ENCODE measurements at regions of chr12 and their contacts with region 1.

Region 1: GRCh38 chr12:50111693-50112455 is at the start of gene COX14:
- DNase-seq: peak; percentile 100
- H3K4me3 Mint-ChIP-seq: peak within 1 kb of the TSS; percentile 92
- H3K27ac Mint-ChIP-seq: peak within 1 kb of the TSS; percentile 93
- H3K4me1 Mint-ChIP-seq: peaks cover 39% of the 10 kb centered on the region
- H3K27me3 Mint-ChIP-seq: no peaks in the 10 kb centered on the region
- total RNA-seq, gene COX14: 46.1 to 48.7 TPM

Region 2: GRCh38 chr12:49462083-49462744 is 649.7 kb before region 1 on chr12:
- CTCF ChIA-PET with region 1: no interaction called
- POLR2A ChIA-PET with region 1: no interaction called
- intact Hi-C with region 1: no loop called
- DNase-seq: no peak
- H3K4me3 Mint-ChIP-seq: no peak overlapping the region
- H3K27ac Mint-ChIP-seq: no peak overlapping the region
- H3K4me1 Mint-ChIP-seq: no peaks in the 10 kb centered on the region
- H3K27me3 Mint-ChIP-seq: no peaks in the 10 kb centered on the region

Region 3: DNA sequence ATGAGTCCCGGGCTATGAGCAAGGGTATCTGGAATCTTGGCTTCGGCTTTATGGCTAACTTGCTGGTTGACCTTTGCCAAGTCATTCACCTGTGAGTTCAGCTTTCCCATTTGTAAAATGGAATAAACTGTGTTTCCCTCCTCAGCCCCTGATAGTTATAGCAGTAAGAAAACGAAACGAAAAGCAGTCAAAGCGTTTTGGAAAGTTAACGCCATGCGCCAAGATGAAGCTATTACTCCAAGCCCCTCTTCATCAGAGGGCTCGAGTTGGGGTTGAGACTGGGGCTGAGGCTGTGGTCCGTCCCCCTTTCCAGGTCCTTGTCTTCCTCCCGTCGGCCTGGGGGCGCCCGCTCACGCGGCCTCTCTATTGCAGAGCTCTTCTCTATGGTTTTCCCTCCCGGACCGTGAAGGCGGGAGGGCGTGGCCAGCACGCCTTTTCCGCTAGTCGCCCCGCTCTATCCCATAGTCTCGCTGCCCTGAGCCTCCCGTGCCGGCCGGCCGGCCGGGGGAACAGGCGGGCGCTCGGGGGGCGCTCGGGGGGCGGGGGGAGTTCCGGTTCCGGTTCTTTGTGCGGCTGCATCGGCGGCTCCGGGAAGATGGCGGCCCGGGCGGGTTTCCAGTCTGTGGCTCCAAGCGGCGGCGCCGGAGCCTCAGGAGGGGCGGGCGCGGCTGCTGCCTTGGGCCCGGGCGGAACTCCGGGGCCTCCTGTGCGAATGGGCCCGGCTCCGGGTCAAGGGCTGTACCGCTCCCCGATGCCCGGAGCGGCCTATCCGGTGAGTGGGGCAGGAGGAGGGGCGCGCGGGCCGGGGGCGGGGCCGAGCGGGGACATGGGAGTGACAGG is 26.9 kb before region 1 on chr12 and contains the start of gene SMARCD1:
- CTCF ChIA-PET with region 1: interaction called, 138 read pairs
- POLR2A ChIA-PET with region 1: interaction called, 21 read pairs
- intact Hi-C with region 1: loop called (anchors 1 kb)
- DNase-seq: peak; percentile 91
- H3K4me3 Mint-ChIP-seq: peak within 1 kb of the TSS; percentile 89
- H3K27ac Mint-ChIP-seq: peak within 1 kb of the TSS; percentile 94
- H3K4me1 Mint-ChIP-seq: peaks cover 44% of the 10 kb centered on the region
- H3K27me3 Mint-ChIP-seq: no peaks in the 10 kb centered on the region
- total RNA-seq, gene SMARCD1: 56.1 to 56.3 TPM

Region 4: DNA sequence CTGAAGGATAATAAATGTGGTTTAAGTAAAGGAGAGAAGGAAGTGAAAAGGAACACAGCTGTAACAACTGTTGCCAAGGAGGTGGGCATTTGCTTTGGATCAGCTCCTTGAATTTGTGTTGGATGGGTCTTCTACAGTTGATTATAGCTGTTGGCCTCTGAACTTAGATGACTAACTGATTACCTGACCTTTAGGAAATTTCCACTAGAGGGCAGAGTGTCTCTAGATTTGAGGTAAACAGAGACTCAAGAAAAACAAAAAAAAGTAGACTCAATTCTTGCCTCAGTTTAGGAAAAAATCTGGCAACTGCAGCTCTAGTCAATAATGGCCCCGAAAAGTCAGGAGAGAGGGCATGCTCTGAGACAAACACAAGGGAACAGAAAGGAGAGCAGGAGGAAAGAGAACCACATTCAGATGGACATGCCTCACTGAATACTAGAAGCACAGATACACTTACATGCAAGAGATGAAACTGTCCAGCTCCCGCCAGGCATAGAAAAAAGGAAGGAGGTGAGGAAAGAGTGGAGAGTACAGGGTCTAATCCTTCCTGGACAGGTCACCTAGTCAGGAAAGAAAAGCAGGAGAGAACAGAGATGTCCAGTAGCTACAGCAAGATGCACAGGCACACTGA is 20.7 kb after region 1 on chr12:
- CTCF ChIA-PET with region 1: interaction called, 128 read pairs
- POLR2A ChIA-PET with region 1: interaction called, 12 read pairs
- intact Hi-C with region 1: no loop called
- DNase-seq: no peak
- H3K4me3 Mint-ChIP-seq: no peak overlapping the region
- H3K27ac Mint-ChIP-seq: peak overlapping the region; percentile 55
- H3K4me1 Mint-ChIP-seq: peaks cover 6% of the 10 kb centered on the region
- H3K27me3 Mint-ChIP-seq: no peaks in the 10 kb centered on the region

Region 5: GRCh38 chr12:50167041-50167828 is 55.4 kb after region 1 on chr12 and contains the start of gene CERS5:
- CTCF ChIA-PET with region 1: interaction called, 30 read pairs
- POLR2A ChIA-PET with region 1: interaction called, 34 read pairs
- intact Hi-C with region 1: loop called (anchors 1 kb)
- DNase-seq: peak; percentile 99
- H3K4me3 Mint-ChIP-seq: peak within 1 kb of the TSS; percentile 84
- H3K27ac Mint-ChIP-seq: peak within 1 kb of the TSS; percentile 94
- H3K4me1 Mint-ChIP-seq: peaks cover 28% of the 10 kb centered on the region
- H3K27me3 Mint-ChIP-seq: no peaks in the 10 kb centered on the region
- total RNA-seq, gene CERS5: 59.5 to 63.0 TPM

Region 6: DNA sequence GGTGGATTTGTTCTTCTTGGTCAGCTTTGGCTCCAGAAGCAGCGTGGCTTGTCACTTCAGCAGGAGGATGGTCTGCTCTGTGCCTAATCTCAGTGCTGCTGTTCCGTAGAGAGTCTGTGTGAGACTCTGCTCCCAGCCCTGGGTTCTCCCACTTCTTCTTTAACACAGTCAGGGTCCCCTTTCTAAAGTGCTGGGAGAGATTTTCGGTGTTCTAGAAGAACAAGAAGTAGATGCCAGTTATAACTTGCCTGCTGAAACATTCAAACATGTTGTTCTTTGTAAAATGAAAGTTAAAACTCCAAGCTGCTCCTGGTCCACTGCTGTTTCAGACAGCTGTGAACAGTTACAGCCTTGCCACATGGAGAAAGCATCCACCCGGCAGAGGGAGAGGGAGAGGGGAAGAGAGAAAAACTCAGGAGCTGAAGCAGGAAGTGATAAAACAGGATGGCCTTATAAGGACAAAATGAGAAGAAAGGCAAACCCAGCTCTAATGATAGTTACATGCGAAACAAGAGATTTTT is 110.5 kb after region 1 on chr12:
- CTCF ChIA-PET with region 1: interaction called, 12 read pairs
- POLR2A ChIA-PET with region 1: interaction called, 8 read pairs
- intact Hi-C with region 1: loop called (anchors 5 kb)
- DNase-seq: peak; percentile 39
- H3K4me3 Mint-ChIP-seq: no peak overlapping the region
- H3K27ac Mint-ChIP-seq: no peak overlapping the region
- H3K4me1 Mint-ChIP-seq: peaks cover 36% of the 10 kb centered on the region
- H3K27me3 Mint-ChIP-seq: no peaks in the 10 kb centered on the region

Region 7: GRCh38 chr12:50400598-50401364 is 288.9 kb after region 1 on chr12 and contains the start of gene LARP4:
- CTCF ChIA-PET with region 1: interaction called, 17 read pairs
- POLR2A ChIA-PET with region 1: interaction called, 4 read pairs
- intact Hi-C with region 1: loop called (anchors 1 kb)
- DNase-seq: peak; percentile 95
- H3K4me3 Mint-ChIP-seq: peak within 1 kb of the TSS; percentile 91
- H3K27ac Mint-ChIP-seq: peak within 1 kb of the TSS; percentile 95
- H3K4me1 Mint-ChIP-seq: peaks cover 23% of the 10 kb centered on the region
- H3K27me3 Mint-ChIP-seq: no peaks in the 10 kb centered on the region
- total RNA-seq, gene LARP4: 62.2 to 64.0 TPM